Activated CD8-positive, alpha-beta memory T cell treated with anti-CD3 and anti-CD28 coated beads, Interleukin-2, amount 10 ng/mL, durations not matched to agents 7 days and 5 days (primary cell): ENCODE measurements at regions of chr2 and their contacts with region 1.

Region 1: DNA sequence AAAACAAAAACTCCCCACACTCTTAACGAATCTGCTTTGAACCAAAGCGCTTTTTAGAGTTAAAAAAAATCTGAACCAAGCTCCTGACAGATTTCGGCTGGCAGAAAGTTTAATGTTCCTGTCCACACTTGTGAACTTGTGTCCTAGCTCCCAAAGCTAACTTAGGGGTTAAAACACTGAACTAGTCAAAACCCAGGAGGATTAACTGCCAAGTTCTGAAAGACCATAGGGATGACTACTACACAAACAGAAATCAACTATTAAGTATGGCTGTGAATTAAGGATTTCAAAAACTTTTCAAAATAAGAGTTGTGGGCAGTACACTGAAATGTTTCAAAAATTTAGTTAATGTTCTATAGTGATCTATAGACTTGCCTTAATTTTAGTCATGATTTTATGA is 26.2 kb upstream of the CDKL4 start:
- DNase-seq: no peak
- ATAC-seq: no peak
- H3K4me3 Mint-ChIP-seq: no peak overlapping the region
- H3K27ac Mint-ChIP-seq: no peak overlapping the region
- H3K4me1 Mint-ChIP-seq: peaks cover 20% of the 10 kb centered on the region
- H3K27me3 Mint-ChIP-seq: no peaks in the 10 kb centered on the region

Region 2: DNA sequence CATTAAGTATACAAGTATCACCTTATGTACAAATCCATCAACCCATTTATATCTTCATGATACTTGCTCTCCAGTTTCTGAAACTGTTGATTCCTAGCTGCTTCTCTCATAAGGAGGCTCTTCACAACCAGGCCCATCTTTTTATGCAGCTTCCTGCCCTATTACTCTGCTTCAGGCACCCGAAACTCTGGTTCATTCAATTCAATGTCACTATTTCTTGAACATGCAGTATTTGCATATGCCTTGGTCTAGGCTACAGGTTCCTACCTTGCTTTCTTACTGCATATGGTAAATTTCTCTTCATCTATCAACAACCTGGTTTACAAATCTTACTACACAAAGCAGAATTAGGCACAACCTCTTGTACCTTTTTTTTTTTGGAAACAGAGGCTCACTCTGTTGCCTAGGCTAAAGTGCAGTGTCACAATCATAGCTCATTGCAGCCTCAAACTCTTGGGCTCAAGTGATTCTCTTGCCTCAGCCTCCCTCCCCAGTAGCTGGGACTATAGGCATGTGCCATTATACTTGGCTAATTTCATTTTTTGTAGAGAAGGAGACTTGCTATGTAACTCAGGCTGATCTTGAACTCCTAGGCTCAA is 23.5 kb before region 1 on chr2:
- CTCF ChIA-PET with region 1: interaction called, 12 read pairs
- DNase-seq: no peak
- ATAC-seq: no peak
- H3K4me3 Mint-ChIP-seq: no peak overlapping the region
- H3K27ac Mint-ChIP-seq: no peak overlapping the region
- H3K4me1 Mint-ChIP-seq: peaks cover 16% of the 10 kb centered on the region
- H3K27me3 Mint-ChIP-seq: peaks cover 2% of the 10 kb centered on the region

Region 3: DNA sequence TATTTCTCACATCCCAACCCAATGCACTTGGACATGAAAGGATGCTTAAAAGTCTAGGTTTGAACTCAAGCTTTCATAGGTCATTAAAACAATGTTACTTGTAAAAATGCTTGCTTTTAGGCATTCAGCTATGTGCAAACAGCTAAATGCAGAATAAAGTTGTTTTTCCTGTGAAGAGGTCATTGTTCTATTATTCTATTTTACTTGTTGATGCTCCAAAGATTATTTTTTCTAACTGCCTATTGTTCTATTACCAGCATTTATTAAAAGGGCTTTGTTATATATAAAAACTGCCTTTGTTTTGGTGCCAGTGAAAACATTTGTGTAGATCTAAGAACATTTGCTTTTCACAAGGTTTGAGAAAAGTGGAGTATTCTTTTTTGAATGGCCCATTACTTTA is 445.2 kb after region 1 on chr2:
- CTCF ChIA-PET with region 1: no interaction called
- DNase-seq: no peak
- ATAC-seq: no peak
- H3K4me3 Mint-ChIP-seq: no peak overlapping the region
- H3K27ac Mint-ChIP-seq: no peak overlapping the region
- H3K4me1 Mint-ChIP-seq: no peaks in the 10 kb centered on the region
- H3K27me3 Mint-ChIP-seq: peaks cover 36% of the 10 kb centered on the region